A549 (cell line): ENCODE measurements at regions of chr12 and their contacts with region 1.

Region 1: GRCh38 chr12:12334367-12335040 is 15.5 kb downstream of the MANSC1 start:
- DNase-seq: peak; percentile 72 to 77
- ATAC-seq: peak; percentile 93
- H3K4me3 ChIP-seq: no peak overlapping the region
- H3K27ac ChIP-seq: peak overlapping the region in 1 of 2 experiments; percentile 9; a peak in 1 of 6 replicates
- H3K4me1 ChIP-seq: peaks cover 13% of the 10 kb centered on the region
- CTCF ChIP-seq: peak; percentile 96
- EP300 ChIP-seq: no peak
- POLR2A ChIP-seq: no peak
- RAD21 ChIP-seq: peak; percentile 80 to 90

Region 2: GRCh38 chr12:12319451-12320183 is 14.9 kb before region 1 on chr12:
- CTCF ChIA-PET with region 1: interaction called, 20 read pairs
- POLR2A ChIA-PET with region 1: no interaction called
- DNase-seq: no peak
- ATAC-seq: peak in 1 of 2 experiments; percentile 29; a peak in 2 of 6 replicates
- H3K4me3 ChIP-seq: no peak overlapping the region
- H3K27ac ChIP-seq: peak overlapping the region; percentile 34 to 40
- H3K4me1 ChIP-seq: peaks cover 16% of the 10 kb centered on the region
- CTCF ChIP-seq: no peak
- EP300 ChIP-seq: no peak
- POLR2A ChIP-seq: no peak
- RAD21 ChIP-seq: no peak

Region 3: DNA sequence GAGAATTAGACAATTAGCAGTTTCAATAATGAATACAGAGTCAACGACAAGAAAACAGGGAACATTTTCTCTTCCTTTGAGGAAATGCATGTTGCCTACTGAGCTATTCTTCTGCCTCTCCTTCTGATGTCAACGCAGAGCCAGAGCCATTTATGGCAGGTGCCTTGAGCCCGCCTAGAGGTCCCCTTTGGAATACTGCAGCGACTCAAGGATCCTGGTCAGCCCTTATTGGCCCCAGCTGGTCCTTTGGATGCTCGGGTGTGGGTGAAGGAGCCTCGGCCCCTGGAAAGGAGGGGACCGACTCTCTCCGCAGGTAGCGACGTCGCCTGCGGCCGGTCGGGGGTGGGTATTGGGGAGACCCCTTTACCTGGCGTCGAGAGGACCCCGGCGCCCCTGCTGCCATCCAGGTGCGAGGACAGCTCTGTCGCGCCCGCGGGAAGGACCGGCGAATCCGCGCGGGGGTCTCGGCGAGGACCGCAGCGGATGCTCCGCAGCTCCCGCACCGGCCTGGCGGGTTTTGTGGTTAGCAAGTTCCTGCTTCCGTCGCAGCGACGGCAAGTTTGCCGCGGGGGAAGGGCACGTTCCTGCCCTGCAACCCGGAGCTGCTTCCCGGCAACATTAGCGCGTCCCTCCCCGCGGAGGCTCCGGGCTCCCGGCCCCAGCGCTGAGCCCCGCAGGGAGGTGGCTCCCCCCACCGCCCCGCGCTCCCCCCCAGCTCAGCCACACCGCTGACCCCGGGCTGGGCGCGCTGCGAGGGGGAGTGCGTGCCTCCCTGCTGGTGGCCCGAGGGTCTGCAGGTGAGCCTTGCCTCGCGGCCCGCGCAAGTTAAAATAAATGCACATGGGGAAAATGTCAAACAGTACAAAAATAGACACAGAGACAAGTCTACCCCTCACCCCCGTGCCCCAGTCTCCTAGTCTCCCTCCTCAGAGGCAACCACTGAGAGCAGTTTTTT is 15.5 kb after region 1 on chr12 and contains the start of gene MANSC1:
- CTCF ChIA-PET with region 1: interaction called, 29 read pairs
- POLR2A ChIA-PET with region 1: interaction called, 3 read pairs
- DNase-seq: peak; percentile 58
- ATAC-seq: peak; percentile 93 to 96
- H3K4me3 ChIP-seq: peak within 1 kb of the TSS; percentile 70
- H3K27ac ChIP-seq: peak within 1 kb of the TSS; percentile 82 to 95
- H3K4me1 ChIP-seq: peaks cover 19% of the 10 kb centered on the region
- CTCF ChIP-seq: no peak
- EP300 ChIP-seq: no peak
- POLR2A ChIP-seq: peak; percentile 37
- RAD21 ChIP-seq: 0 out of 5 replicates have a peak, but pooled peaks of 1 of the 2 experiments have one; percentile 7
- polyA plus RNA-seq, gene MANSC1: 3.9 and 9.7 TPM in 2 replicates

Region 4: DNA sequence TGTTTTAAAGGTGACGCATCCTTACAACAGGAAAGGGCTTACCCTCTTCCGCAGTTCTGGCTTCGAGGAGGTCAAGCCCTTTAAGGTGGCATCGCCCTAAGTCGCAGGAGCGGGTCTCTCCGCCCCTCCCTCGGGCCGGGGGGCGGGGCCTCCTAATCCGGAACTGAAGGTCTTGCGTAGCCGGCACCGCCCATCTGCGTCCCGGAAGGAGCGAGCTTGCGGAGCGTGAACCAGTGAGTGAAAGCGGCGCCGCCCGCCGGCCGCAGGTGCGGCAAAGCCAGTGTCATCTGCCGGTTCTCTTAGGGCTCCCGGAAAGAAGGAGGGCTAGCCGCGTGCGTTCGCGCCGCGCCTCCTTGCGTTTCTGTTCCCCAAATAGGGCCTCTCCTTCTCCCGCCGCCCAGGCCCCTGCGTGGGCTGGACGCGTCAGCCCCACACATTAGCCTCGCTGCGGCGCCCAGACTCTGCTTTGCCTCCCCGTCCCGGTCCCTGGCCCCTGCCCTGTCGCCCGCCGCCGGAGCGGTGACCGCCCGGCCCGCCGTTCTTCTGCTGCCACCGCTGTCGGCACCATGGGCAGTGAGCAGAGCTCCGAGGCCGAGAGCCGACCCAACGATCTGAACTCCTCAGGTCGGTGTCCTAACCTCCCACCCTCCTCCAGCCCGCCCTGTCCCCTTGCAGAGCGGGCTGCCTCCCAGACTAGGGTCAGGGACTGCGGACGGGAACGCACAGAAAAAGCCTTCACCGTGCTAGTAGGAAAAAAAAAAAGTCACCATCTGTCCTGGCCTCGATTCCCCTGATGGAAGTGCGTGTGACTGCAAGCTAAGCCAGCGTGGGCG is 22.6 kb after region 1 on chr12 and contains the start of gene BORCS5:
- CTCF ChIA-PET with region 1: interaction called, 12 read pairs
- POLR2A ChIA-PET with region 1: no interaction called
- DNase-seq: peak; percentile 87 to 98
- ATAC-seq: peak; percentile 98
- H3K4me3 ChIP-seq: peak within 1 kb of the TSS; percentile 73
- H3K27ac ChIP-seq: peak within 1 kb of the TSS; percentile 88 to 94
- H3K4me1 ChIP-seq: peaks cover 12% of the 10 kb centered on the region
- CTCF ChIP-seq: peak; percentile 43
- EP300 ChIP-seq: no peak
- POLR2A ChIP-seq: peak; percentile 97
- RAD21 ChIP-seq: peak; percentile 35 to 48; a peak in 4 of 5 replicates
- polyA plus RNA-seq, gene BORCS5: 10.2 and 13.7 TPM in 2 replicates

Region 5: GRCh38 chr12:12456637-12457036 is 122.1 kb after region 1 on chr12:
- CTCF ChIA-PET with region 1: no interaction called
- POLR2A ChIA-PET with region 1: no interaction called
- DNase-seq: no peak
- ATAC-seq: no peak
- H3K4me3 ChIP-seq: no peak overlapping the region
- H3K27ac ChIP-seq: no peak overlapping the region
- H3K4me1 ChIP-seq: no peaks in the 10 kb centered on the region; the same call in 2 of the 3 replicates
- CTCF ChIP-seq: no peak
- EP300 ChIP-seq: no peak
- POLR2A ChIP-seq: no peak
- RAD21 ChIP-seq: no peak